ENCODE measurements at regions of chr22 and their contacts with region 1.

Region 1: DNA sequence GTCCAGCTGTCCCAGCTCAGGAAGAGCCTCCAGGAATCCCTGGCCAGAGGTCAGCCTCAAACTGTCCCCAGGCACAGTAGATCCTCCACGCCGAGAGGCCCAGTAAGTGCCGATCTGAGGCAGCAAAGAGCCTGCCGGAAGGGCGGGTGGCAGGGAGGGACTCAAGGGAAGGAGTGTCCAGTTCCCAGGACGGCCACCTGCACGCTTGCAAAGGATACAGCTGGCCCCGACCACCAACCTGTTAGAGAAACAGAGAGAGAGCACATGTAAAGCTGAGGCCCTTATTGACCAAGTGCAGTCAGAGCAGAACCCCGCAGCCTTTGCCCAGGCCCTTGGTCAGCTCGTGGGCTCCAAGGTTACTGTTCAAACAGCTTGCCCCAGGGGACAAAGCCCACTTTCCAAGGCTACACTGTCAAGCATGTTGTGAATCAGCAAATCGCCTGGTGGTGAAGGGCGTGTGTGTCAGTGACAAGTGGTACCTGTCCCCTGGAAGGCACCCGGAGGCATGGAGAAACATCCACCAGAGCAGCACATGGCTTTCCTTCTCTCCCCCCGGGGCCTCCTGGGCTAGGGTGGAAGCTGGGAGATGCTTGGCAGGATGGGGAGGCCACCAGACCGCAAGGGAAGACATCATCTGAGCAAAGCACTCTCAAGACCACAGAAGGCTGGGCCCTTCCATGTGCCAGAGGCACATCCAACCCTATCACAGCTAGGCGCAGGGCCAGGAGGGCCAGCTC is 42.6 kb upstream of the COMT start:
- DNase-seq: no peak

Region 2: DNA sequence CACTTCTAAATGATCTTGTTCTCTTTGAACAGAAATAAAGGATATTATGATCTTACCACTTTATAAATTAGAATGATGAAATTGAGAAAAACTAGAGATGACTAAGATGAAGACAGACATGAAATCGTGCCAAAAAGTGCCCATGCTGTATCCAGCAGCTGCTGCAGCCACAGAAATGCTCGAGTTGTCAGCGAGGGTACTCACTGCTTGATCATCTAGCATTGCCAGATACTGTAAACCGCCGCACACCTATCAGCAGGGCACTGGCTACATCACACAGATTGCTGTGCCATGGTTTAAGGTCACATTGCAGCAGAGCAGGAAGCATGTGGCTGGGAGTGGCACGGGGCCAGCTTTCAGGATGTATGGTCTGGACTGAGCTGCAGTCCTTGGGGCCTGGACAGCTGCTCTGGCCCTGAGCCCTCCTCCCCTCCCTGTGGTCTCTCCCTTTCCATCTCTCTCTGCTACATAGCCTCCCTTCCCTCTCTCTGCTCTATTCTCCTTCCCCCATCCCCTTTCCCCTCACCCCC is 235.6 kb before region 1 on chr22:
- intact Hi-C with region 1: no loop called
- DNase-seq: peak; percentile 90

Region 3: GRCh38 chr22:19854778-19855503 is 44.1 kb before region 1 on chr22 and contains the starts of genes GNB1L and RTL10:
- intact Hi-C with region 1: no loop called
- DNase-seq: peak; percentile 100
- total RNA-seq, gene GNB1L: 3.6 to 3.9 TPM
- total RNA-seq, gene RTL10: 7.6 to 8.6 TPM

Region 4: DNA sequence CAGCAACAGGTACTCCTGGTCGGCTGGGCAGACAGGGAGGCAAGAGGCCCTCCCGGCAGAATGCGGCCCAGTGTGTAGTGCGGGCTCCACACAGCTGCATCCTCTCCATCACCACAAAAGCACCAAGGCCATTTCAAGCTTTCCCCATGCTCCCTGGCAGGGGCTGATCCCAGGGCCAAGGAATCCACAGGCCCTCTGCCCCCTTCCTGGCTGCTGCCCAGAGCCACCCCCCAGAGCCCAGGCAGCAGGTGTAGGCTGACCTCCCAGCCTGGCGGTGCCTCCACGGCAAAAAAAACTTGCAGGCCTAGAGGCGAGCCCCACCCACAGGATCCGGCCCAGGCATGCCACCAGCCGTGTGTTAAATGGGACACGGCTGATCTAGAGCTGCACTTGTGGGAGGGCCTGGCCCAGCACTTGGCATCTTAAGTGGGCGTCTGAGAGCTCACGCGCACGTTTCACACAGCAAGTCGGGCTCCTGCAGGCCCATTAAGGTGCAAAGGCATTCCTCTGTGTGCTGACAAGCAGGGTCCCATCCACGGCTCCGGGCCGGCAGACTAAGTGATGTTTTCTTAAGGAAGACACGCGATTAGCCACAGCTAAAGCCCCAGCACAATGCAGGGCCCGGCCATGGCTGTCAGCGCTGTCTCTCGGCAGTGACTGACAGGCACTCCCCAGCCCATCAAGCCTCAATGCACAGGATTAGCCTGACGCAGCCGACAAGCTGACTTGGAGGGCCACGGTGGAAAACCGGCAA is 24.5 kb before region 1 on chr22:
- intact Hi-C with region 1: no loop called
- DNase-seq: peak; percentile 69

Region 5: GRCh38 chr22:19932367-19933206 is 33.6 kb after region 1 on chr22:
- intact Hi-C with region 1: loop called in 1 of 2 experiments (anchors 1 kb)
- DNase-seq: no peak

Region 6: DNA sequence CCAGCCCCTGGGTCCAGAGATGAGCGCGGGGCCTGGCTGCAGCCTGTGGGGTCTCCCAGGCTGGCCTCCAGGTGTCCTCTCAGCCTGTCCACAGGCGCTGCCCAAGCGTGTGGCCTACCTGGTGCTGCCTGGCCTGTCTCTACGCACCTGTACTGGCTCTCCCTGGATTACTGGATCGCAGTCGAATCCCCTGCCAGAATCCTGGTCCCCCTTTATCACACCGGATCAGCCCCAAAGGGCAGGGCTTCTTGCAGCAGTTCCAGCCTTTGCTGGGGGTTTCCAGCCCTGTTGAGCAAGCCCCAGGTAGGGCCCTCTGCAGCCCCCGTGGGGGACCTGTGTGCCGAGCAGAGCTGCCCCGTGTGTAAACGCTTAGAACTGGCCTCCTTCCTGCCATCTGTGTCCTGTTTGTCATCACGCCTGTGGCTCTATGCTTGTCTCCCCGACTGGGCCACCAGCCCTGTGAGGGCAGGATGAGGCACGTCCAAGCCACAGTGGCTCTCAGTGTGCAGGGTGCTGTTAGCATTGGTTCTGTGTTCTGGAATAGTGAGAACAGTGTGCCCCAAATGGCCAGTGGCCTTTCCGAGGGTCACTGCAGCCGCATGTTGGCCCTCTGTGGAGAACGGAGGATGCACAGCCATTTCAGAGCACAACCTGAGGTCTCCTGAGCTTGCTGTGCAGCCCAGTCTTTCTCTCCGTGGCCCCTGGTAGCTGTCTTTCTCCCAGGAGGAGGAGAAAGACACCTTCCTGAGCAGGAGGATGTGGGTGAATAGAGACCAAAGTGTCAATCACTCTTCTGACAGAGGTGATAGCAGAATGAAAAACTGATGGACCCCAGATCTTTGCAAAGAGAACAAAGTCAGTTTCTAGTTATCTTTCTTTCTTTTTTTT is 56.5 kb after region 1 on chr22:
- intact Hi-C with region 1: no loop called
- DNase-seq: no peak